ENCODE measurements at regions of chr6 and their contacts with region 1.

Region 1: DNA sequence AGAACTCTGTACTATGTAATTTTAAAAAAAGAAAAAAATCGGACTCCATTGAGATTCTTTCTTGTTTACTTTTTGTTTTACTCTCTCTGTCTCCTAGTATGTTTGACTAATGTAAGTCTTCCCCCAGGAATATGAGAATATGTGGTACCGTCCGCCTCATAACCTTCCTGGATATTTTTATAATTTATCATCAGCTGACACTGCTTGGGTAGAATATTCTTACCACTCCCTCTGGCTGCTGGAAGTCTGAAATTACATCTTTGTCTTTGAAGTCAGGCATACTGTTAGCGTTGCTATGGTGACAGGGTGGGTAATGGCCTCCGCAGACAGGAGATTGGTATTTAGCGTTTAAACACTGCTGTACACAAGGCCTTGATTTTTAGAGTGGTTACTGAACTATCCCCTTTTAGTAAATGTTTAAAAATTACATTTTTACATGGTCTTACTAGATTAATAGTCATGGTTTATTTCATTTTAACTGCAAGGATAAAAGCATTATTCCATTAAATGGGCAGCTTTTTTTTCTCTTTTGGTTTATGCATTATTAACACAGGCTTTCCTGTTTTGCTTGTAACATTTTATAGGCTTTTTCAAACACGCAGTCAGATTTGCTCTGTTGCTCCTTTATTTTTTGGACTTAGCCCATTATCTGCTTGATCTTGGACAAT is 176.4 kb downstream of the ARID1B start:
- DNase-seq: peak; percentile 14
- H3K4me3 Mint-ChIP-seq: no peak overlapping the region
- H3K27ac Mint-ChIP-seq: peak overlapping the region; percentile 45
- H3K4me1 Mint-ChIP-seq: peaks cover 51% of the 10 kb centered on the region
- H3K27me3 Mint-ChIP-seq: no peaks in the 10 kb centered on the region

Region 2: DNA sequence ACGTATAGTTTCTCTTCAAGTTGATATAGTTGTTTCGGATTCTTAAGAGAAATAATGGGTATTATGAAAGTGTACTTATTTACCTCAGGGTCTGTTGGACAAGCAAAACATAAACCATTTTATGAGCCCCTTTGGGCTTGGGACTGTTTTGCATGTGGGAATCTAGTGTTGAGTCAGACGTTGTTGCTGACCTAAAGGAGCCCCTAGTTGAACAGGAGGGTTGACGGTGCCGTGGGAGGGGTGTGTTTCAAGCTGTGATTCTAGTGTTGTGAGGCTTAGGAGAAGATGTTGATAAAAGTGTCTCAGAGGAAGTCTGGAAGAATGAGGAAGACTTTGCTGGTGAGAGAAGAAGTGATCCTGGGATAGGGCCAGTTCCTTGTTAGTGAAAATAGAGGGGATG is 36.4 kb before region 1 on chr6:
- intact Hi-C with region 1: no loop called
- DNase-seq: no peak
- H3K4me3 Mint-ChIP-seq: no peak overlapping the region
- H3K27ac Mint-ChIP-seq: no peak overlapping the region
- H3K4me1 Mint-ChIP-seq: peaks cover 36% of the 10 kb centered on the region
- H3K27me3 Mint-ChIP-seq: peaks cover 1% of the 10 kb centered on the region

Region 3: DNA sequence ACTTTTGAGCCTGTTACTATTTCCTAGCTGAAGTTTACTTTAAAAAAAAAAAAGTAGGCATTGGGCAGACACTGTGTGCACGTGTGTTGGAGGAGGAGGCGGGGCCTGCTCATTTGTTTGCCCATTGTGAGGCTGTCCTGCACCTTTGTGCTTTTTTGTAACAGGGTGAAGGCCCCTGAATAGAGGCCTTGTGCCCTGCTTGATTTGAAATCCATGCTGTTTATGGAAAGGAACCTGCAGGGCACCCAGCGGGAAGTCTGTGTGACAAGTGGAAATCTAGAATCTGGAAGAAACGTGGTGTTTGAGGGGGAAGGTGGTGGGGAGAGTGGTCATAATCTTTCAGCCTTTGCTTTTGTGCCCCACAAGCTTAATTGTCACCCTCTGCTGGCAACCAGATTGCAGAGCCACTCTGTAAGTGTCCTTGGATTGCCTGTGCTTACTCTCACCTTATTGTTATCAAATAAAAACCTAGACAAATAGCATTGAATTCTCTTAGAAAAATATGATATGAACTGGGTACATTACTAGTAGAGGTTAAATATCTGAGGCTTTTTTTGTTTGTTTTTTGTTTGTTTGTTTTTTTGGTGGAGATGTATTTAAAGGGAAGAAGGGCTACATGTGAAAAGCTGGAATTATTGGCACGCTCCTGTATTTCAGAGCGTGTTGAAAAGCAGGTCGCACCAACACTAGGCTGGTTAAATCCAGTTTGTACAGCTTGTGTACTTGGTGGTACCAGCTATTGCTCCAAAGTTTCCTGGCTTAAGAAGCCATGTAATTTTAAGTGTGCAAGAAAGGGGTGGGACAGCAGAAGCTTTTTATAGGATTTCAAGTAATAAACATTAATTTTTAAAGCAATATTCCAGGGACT is 20.2 kb before region 1 on chr6:
- intact Hi-C with region 1: loop called (anchors 1 kb)
- DNase-seq: no peak
- H3K4me3 Mint-ChIP-seq: no peak overlapping the region
- H3K27ac Mint-ChIP-seq: no peak overlapping the region
- H3K4me1 Mint-ChIP-seq: peaks cover 45% of the 10 kb centered on the region
- H3K27me3 Mint-ChIP-seq: no peaks in the 10 kb centered on the region

Region 4: GRCh38 chr6:156976216-156977127 is 22.9 kb after region 1 on chr6:
- intact Hi-C with region 1: loop called (anchors 1 kb)
- DNase-seq: no peak
- H3K4me3 Mint-ChIP-seq: peak overlapping the region; percentile 76
- H3K27ac Mint-ChIP-seq: peak overlapping the region; percentile 64
- H3K4me1 Mint-ChIP-seq: peaks cover 57% of the 10 kb centered on the region
- H3K27me3 Mint-ChIP-seq: peaks cover 2% of the 10 kb centered on the region

Region 5: DNA sequence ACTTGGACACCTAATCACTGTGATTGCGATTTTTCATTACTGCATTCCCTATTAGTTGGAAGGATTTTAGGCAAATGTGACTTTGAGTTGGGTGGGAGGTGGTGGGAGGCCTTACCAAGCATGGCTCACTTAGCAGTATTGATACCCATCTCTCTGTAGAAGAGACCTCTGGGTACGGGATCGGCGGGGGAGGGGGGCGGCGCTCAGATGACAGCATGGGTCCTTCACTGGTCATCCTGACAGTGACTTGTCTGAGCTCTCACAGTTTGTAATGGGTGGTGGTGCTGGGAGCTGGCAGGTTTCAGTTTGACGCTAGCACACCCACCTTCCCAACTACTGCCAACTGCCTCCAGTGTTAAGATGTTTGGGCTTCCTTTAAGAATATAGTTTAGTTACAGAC is 55.0 kb after region 1 on chr6:
- intact Hi-C with region 1: loop called (anchors 5 kb)
- DNase-seq: no peak
- H3K4me3 Mint-ChIP-seq: no peak overlapping the region
- H3K27ac Mint-ChIP-seq: no peak overlapping the region
- H3K4me1 Mint-ChIP-seq: peaks cover 16% of the 10 kb centered on the region
- H3K27me3 Mint-ChIP-seq: no peaks in the 10 kb centered on the region

Region 6: GRCh38 chr6:157184202-157185020 is 230.8 kb after region 1 on chr6:
- intact Hi-C with region 1: loop called (anchors 10 kb)
- DNase-seq: peak; percentile 37
- H3K4me3 Mint-ChIP-seq: no peak overlapping the region
- H3K27ac Mint-ChIP-seq: peak overlapping the region; percentile 64
- H3K4me1 Mint-ChIP-seq: peaks cover 25% of the 10 kb centered on the region
- H3K27me3 Mint-ChIP-seq: no peaks in the 10 kb centered on the region